ENCODE measurements at regions of chr1 and their contacts with region 1.

Region 1: DNA sequence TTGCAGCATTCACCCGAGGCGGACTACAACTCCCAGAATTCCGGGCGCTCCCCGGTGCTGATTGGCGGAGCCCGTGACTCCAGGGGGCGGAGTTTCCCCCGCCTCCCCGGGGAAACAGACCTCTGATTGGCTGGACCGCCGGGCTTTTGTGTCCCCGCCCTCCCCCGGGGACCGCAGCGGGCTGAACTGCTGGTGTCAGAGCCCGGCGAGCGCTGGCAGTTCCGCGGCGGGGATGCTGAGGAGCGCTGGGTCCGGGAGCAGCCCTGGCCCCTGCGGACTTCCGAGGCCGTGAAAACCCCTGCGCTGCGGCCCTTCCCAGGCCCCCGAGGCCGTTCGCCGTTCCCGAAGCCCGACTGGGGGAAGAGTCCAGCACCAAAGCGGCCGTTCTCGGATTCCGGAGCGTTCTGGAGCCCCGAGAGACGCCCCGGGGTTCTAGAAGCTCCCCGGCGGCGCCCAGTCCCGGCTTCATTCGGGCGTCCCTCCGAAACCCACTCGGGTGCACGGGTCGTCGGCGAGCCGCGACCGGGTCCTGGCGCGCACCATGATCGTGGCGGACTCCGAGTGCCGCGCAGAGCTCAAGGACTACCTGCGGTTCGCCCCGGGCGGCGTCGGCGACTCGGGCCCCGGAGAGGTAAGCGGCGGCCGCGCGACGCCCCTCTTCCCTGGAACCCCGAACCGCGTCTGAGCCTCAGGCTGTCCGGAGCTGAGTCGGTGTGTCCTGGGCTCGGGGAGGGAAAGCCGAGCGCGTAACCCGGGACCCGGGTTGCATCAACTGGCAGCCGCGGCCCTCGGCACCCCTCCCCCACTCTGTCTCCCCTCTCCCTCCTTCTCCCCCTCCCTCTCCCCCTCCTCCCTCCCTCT is at the start of gene SESN2:
- DNase-seq: peak; percentile 99
- H3K4me3 Mint-ChIP-seq: peak within 1 kb of the TSS; percentile 74
- H3K27ac Mint-ChIP-seq: peak within 1 kb of the TSS; percentile 88
- H3K4me1 Mint-ChIP-seq: peaks cover 38% of the 10 kb centered on the region
- H3K27me3 Mint-ChIP-seq: peaks cover 3% of the 10 kb centered on the region
- total RNA-seq, gene SESN2: 7.1 and 7.9 TPM in 2 replicates

Region 2: DNA sequence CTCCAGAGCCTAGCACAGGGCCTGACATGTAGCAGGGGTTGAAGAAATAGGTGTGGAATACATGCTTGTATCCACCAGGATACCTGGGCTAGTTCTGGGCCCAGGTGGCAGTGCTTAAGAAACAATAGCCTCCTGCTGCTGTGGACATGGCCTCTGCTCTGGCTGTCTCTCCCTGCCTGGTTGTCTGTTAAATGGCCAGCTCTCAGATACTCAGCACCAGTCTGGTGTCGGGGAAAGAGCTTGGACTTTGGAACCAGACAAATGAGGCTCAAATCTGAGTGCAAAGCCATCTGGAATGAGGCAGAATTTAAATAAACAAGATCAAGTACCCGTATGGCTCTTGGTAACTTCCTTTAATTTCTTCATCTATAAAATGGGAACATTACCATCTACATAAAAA is 31.3 kb after region 1 on chr1:
- intact Hi-C with region 1: no loop called
- DNase-seq: no peak
- H3K4me3 Mint-ChIP-seq: no peak overlapping the region
- H3K27ac Mint-ChIP-seq: no peak overlapping the region
- H3K4me1 Mint-ChIP-seq: no peaks in the 10 kb centered on the region
- H3K27me3 Mint-ChIP-seq: no peaks in the 10 kb centered on the region

Region 3: GRCh38 chr1:28329395-28330153 is 70.0 kb after region 1 on chr1:
- intact Hi-C with region 1: loop called (anchors 2 kb)
- DNase-seq: no peak
- H3K4me3 Mint-ChIP-seq: peak overlapping the region; percentile 93
- H3K27ac Mint-ChIP-seq: peak overlapping the region; percentile 97
- H3K4me1 Mint-ChIP-seq: peaks cover 28% of the 10 kb centered on the region
- H3K27me3 Mint-ChIP-seq: no peaks in the 10 kb centered on the region

Region 4: GRCh38 chr1:28581536-28582247 is 322.2 kb after region 1 on chr1:
- intact Hi-C with region 1: no loop called
- DNase-seq: peak; percentile 95
- H3K4me3 Mint-ChIP-seq: peak overlapping the region; percentile 96
- H3K27ac Mint-ChIP-seq: peak overlapping the region; percentile 94
- H3K4me1 Mint-ChIP-seq: peaks cover 21% of the 10 kb centered on the region
- H3K27me3 Mint-ChIP-seq: no peaks in the 10 kb centered on the region